SK-N-SH (cell line): ENCODE measurements at regions of chr5 and their contacts with region 1.

Region 1: GRCh38 chr5:138549414-138549813 is 6.4 kb upstream of the ETF1 start:
- DNase-seq: no peak
- H3K4me3 ChIP-seq: no peak overlapping the region
- H3K27ac ChIP-seq: no peak overlapping the region
- H3K4me1 ChIP-seq: peaks cover 6 to 13% of the 10 kb centered on the region in 2 experiments; a peak in 2 of 4 replicates
- H3K27me3 ChIP-seq: no peaks in the 10 kb centered on the region
- CTCF ChIP-seq: no peak
- EP300 ChIP-seq: no peak
- RAD21 ChIP-seq: no peak

Region 2: GRCh38 chr5:138568061-138568824 is 18.8 kb after region 1 on chr5:
- CTCF ChIA-PET with region 1: interaction called, 13 read pairs
- POLR2A ChIA-PET with region 1: no interaction called
- DNase-seq: peak; percentile 15
- H3K4me3 ChIP-seq: no peak overlapping the region
- H3K27ac ChIP-seq: 0 out of 4 replicates have a peak overlapping the region, but pooled peaks of 1 of the 2 experiments have one; percentile 0
- H3K4me1 ChIP-seq: 0 out of 4 replicates have a peak, but pooled peaks cover 0 to 4% of the 10 kb centered on the region in 2 experiments
- H3K27me3 ChIP-seq: no peaks in the 10 kb centered on the region
- CTCF ChIP-seq: peak; percentile 24
- EP300 ChIP-seq: no peak
- RAD21 ChIP-seq: no peak

Region 3: GRCh38 chr5:138585157-138585556 is 35.7 kb after region 1 on chr5:
- CTCF ChIA-PET with region 1: no interaction called
- POLR2A ChIA-PET with region 1: no interaction called
- DNase-seq: no peak
- H3K4me3 ChIP-seq: no peak overlapping the region
- H3K27ac ChIP-seq: no peak overlapping the region
- H3K4me1 ChIP-seq: no peaks in the 10 kb centered on the region
- H3K27me3 ChIP-seq: no peaks in the 10 kb centered on the region
- CTCF ChIP-seq: no peak
- EP300 ChIP-seq: no peak
- RAD21 ChIP-seq: no peak

Region 4: DNA sequence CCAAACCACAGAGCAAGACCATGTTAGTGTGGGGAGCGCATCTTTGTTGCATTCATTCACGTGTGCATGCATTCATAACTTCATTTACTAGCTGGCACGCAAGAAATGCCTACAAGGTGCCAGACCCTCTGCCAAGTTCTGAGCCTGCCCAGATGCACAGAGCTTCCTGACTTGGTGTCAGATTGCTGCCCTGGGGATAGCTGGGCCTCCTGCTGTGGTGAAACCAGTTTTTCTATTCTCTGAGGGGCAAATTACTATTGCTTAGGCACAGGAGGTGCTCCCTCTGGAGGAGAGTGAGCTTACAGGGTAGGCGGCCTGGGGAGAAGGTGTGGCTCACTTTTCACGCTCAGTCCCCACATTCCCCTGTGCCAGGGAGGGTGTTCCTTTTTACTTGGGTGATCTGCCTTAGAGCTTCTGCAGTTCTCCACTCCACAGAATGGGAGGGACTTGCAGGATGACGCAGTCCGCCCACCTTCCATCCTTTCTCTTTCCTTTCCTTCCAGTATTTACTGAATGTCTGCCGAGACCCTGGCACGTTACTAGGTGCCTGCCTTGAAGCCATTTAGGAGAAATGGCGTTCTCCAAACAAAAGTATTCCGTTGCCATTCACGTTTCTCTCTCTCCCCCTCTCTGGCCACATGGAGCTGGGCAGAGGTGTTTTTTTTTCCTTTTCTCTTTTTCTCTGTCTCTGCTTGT is 175.9 kb after region 1 on chr5:
- CTCF ChIA-PET with region 1: no interaction called
- POLR2A ChIA-PET with region 1: no interaction called
- DNase-seq: peak; percentile 43
- H3K4me3 ChIP-seq: no peak overlapping the region
- H3K27ac ChIP-seq: no peak overlapping the region
- H3K4me1 ChIP-seq: peaks cover 0 to 19% of the 10 kb centered on the region in 2 experiments; a peak in 1 of 4 replicates
- H3K27me3 ChIP-seq: 0 out of 2 replicates have a peak, but pooled peaks cover 8% of the 10 kb centered on the region
- CTCF ChIP-seq: peak; percentile 29; the same call in 1 of the 2 replicates
- EP300 ChIP-seq: peak in 1 of 2 experiments; percentile 40; a peak in 1 of 4 replicates
- RAD21 ChIP-seq: peak; percentile 16